Endothelial cell of umbilical vein (primary cell): ENCODE measurements at regions of chr19 and their contacts with region 1.

Region 1: GRCh38 chr19:37906869-37907734 is at the start of gene SIPA1L3:
- DNase-seq: peak; percentile 97
- H3K4me3 ChIP-seq: peak within 1 kb of the TSS; percentile 40 to 99 (median 83)
- H3K27ac ChIP-seq: peak within 1 kb of the TSS; percentile 50
- H3K4me1 ChIP-seq: peaks cover 15% of the 10 kb centered on the region
- H3K27me3 ChIP-seq: no peaks in the 10 kb centered on the region
- CTCF ChIP-seq: no peak
- POLR2A ChIP-seq: peak; percentile 82
- total RNA-seq, gene SIPA1L3: 44.4 and 47.2 TPM in 2 replicates

Region 2: GRCh38 chr19:37686341-37686740 is 220.8 kb before region 1 on chr19:
- CTCF ChIA-PET with region 1: no interaction called
- POLR2A ChIA-PET with region 1: no interaction called
- dilution Hi-C with region 1: no loop called
- intact Hi-C with region 1: no loop called
- DNase-seq: no peak
- H3K4me3 ChIP-seq: no peak overlapping the region
- H3K27ac ChIP-seq: no peak overlapping the region
- H3K4me1 ChIP-seq: no peaks in the 10 kb centered on the region
- H3K27me3 ChIP-seq: no peaks in the 10 kb centered on the region
- CTCF ChIP-seq: no peak
- POLR2A ChIP-seq: no peak

Region 3: DNA sequence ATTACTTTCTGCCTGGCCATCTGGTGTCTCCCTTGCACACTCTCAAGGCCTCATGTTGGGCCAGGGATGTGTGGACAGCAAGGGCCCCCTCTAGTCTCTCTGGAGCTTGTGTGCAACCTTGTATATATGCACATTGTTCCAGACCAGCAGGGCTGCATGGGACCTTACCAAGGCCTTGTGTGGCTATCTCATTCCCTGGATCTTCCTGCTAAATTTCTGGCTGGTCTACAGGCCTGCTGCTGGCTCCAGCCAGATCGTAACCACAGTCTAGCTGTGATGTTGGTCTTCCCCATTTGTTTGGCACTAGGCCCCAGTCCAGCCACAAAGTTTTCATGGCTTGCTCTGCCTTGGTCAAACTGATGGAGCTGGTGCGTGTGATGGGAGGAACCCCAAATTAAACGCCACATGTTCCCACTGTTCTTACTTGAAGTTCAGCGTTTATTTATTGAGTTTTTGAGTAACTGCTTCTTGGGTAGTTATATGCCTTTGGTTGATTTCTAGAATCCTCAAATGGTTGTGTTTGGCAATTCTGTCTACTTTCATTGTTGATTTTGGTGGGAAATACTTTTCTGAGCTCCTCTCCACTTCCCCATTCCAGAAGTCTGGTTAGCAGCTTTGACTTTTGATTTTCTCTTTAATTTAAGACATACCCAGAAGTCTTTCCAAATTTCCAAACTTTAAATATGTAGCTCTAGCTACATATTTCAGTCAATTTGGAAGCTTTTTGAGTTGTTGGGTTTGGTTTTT is 56.3 kb after region 1 on chr19:
- CTCF ChIA-PET with region 1: interaction called, 12 read pairs
- POLR2A ChIA-PET with region 1: no interaction called
- dilution Hi-C with region 1: no loop called
- intact Hi-C with region 1: loop called (anchors 2 kb)
- DNase-seq: peak; percentile 29
- H3K4me3 ChIP-seq: no peak overlapping the region
- H3K27ac ChIP-seq: no peak overlapping the region
- H3K4me1 ChIP-seq: peaks cover 18% of the 10 kb centered on the region
- H3K27me3 ChIP-seq: no peaks in the 10 kb centered on the region
- CTCF ChIP-seq: no peak
- POLR2A ChIP-seq: no peak

Region 4: GRCh38 chr19:38004521-38005223 is 97.6 kb after region 1 on chr19:
- CTCF ChIA-PET with region 1: interaction called, 54 read pairs
- POLR2A ChIA-PET with region 1: interaction called, 25 read pairs
- dilution Hi-C with region 1: no loop called
- intact Hi-C with region 1: loop called (anchors 1 kb)
- DNase-seq: peak; percentile 97
- H3K4me3 ChIP-seq: peak overlapping the region in 2 of 3 experiments; percentile 6 to 44
- H3K27ac ChIP-seq: peak overlapping the region; percentile 99
- H3K4me1 ChIP-seq: peaks cover 46% of the 10 kb centered on the region
- H3K27me3 ChIP-seq: no peaks in the 10 kb centered on the region
- CTCF ChIP-seq: no peak
- POLR2A ChIP-seq: peak; percentile 96

Region 5: GRCh38 chr19:38061294-38061693 is 154.2 kb after region 1 on chr19:
- CTCF ChIA-PET with region 1: interaction called, 26 read pairs
- POLR2A ChIA-PET with region 1: interaction called, 6 read pairs
- dilution Hi-C with region 1: no loop called
- intact Hi-C with region 1: no loop called
- DNase-seq: no peak
- H3K4me3 ChIP-seq: no peak overlapping the region
- H3K27ac ChIP-seq: peak overlapping the region; percentile 42
- H3K4me1 ChIP-seq: peaks cover 22% of the 10 kb centered on the region
- H3K27me3 ChIP-seq: no peaks in the 10 kb centered on the region
- CTCF ChIP-seq: no peak
- POLR2A ChIP-seq: no peak

Region 6: DNA sequence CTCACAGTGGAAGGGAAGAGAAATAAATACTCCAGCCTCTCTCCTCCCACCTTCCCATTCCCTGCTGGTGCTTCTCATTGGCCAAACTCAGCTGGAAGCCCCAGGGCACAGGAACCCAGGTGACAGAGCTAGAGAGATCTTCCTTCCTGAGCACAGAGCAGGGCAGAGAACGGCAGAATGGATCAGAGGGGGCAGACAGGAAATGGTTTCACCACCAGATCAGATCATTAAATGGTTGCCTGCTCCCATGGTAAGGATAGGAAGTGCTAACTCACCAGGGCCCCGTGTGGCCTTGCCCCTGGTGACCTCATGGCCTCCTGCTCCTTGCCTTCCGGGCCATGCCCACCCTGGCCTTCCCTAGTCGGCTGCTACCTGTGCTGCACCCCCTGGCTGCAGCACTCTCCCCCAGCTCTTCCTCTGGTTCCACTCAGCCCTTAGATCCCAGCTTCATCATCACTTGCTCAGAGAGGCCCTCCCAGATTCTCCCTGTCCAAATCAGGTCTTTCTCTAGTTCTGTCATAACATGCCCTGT is 208.2 kb after region 1 on chr19:
- CTCF ChIA-PET with region 1: interaction called, 14 read pairs
- POLR2A ChIA-PET with region 1: no interaction called
- dilution Hi-C with region 1: no loop called
- intact Hi-C with region 1: no loop called
- DNase-seq: no peak
- H3K4me3 ChIP-seq: no peak overlapping the region
- H3K27ac ChIP-seq: no peak overlapping the region
- H3K4me1 ChIP-seq: no peaks in the 10 kb centered on the region
- H3K27me3 ChIP-seq: no peaks in the 10 kb centered on the region
- CTCF ChIP-seq: no peak
- POLR2A ChIP-seq: no peak

Region 7: GRCh38 chr19:38224014-38224862 is 317.1 kb after region 1 on chr19 and contains the start of gene DPF1:
- CTCF ChIA-PET with region 1: interaction called, 28 read pairs
- POLR2A ChIA-PET with region 1: no interaction called
- dilution Hi-C with region 1: no loop called
- intact Hi-C with region 1: no loop called
- DNase-seq: peak; percentile 61
- H3K4me3 ChIP-seq: peak within 1 kb of the TSS; percentile 6 to 60 (median 31)
- H3K27ac ChIP-seq: no peak within 1 kb of the TSS
- H3K4me1 ChIP-seq: peaks cover 12% of the 10 kb centered on the region
- H3K27me3 ChIP-seq: peaks cover 2 to 8% of the 10 kb centered on the region in 2 experiments
- CTCF ChIP-seq: peak in 1 of 2 donors; percentile 6
- POLR2A ChIP-seq: no peak
- total RNA-seq, gene DPF1: 3.9 and 5.0 TPM in 2 replicates